ENCODE measurements at regions of chr3 and their contacts with region 1.

Region 1: DNA sequence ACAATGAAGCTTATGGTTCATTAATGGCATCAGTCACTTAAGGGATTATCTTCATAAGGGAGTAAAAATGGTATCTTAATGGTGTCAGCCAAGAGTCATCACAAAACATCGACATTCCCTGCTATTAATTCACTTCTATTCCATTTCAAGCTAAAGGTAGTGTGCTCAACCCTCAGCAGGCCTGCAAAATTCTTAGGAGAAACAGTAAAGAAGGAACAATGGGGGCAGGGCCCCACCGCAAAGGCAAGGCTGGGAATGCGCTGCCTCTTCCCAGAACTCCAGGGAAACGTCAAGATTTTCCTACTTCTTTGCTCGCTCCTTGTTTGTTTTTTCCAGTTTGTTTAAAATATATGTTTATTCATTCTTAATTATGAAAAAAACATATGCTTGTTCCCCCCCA is 187.3 kb upstream of the TSC22D2 start:
- DNase-seq: no peak
- H3K4me3 ChIP-seq: no peak overlapping the region
- H3K27ac ChIP-seq: no peak overlapping the region
- H3K4me1 ChIP-seq: peaks cover 4% of the 10 kb centered on the region
- CTCF ChIP-seq: no peak

Region 2: DNA sequence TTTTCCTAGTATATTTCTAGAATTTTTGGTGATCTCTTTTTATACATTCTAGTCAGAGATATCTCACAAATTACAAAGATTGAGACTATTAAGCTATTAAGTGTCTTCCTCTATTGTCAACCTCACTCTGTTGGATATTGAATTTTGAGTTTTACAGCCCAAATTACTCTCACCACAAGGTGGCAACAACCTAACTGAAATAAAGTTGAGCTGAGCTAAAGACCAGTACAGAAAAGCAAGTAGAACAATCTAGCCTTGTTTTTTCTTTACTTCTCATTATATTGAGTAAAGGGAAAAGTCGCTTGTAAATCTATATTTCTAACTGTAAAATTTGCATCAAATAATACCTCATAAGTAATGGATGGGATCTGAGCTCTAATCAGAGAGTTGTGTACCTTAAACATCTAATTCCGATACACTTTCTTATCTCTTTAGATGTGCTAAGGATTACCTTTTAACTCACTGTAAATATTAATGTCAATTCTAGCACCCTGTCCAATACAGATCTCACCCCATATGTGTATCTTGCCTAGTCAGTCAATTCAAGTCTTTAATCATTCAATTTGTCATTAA is 455.0 kb before region 1 on chr3:
- CTCF ChIA-PET with region 1: no interaction called
- POLR2A ChIA-PET with region 1: no interaction called
- intact Hi-C with region 1: loop called (anchors 5 kb)
- DNase-seq: peak; percentile 37
- H3K4me3 ChIP-seq: no peak overlapping the region
- H3K27ac ChIP-seq: no peak overlapping the region
- H3K4me1 ChIP-seq: no peaks in the 10 kb centered on the region
- CTCF ChIP-seq: peak; percentile 84

Region 3: GRCh38 chr3:149936812-149937233 is 284.0 kb before region 1 on chr3:
- CTCF ChIA-PET with region 1: no interaction called
- POLR2A ChIA-PET with region 1: no interaction called
- intact Hi-C with region 1: loop called (anchors 2 kb)
- DNase-seq: peak; percentile 39
- H3K4me3 ChIP-seq: no peak overlapping the region
- H3K27ac ChIP-seq: no peak overlapping the region
- H3K4me1 ChIP-seq: no peaks in the 10 kb centered on the region
- CTCF ChIP-seq: peak; percentile 87

Region 4: DNA sequence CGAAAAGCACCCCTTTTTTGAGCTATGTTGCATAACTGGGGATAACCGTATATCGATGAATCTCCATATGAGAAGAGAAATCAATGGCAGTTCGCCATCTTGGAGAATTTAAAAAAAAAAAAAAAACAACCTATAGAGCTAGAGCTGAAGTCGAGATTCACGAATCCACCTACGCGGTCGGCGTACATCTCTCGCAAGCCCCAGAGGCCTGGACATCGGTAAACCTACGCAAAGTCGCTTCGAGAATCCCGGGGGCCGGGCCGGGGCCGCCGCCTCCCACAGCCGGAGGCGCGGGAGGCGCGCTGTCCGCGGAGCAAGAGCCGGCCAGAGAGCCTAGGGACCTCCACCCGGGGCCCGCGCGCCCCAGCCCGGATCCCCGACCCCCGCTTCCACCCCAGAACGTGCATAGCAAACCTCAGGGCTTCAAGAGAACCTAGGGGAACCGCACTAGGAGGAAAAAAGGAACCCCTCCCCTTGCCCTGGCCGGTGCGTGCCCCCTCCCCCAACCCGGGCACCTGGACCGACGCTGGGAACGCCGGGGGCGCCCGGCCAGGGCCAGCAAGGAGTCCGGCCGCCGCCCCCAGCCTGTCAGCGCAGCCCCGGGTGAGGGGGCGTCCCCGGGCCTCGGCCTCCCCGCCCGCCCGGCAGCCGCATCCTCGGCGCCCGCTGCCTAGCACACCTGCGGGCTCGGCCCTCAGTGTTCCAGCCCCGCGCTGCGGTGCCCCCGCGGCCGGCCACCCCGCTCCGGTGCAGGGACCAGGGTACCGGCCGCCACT is 250.7 kb before region 1 on chr3:
- CTCF ChIA-PET with region 1: interaction called, 3 read pairs
- POLR2A ChIA-PET with region 1: no interaction called
- intact Hi-C with region 1: loop called (anchors 5 kb)
- DNase-seq: peak; percentile 55
- H3K4me3 ChIP-seq: peak overlapping the region; percentile 71
- H3K27ac ChIP-seq: no peak overlapping the region
- H3K4me1 ChIP-seq: peaks cover 8% of the 10 kb centered on the region
- CTCF ChIP-seq: no peak

Region 5: GRCh38 chr3:150094150-150094925 is 126.5 kb before region 1 on chr3:
- CTCF ChIA-PET with region 1: no interaction called
- POLR2A ChIA-PET with region 1: no interaction called
- intact Hi-C with region 1: no loop called
- DNase-seq: no peak
- H3K4me3 ChIP-seq: no peak overlapping the region
- H3K27ac ChIP-seq: no peak overlapping the region
- H3K4me1 ChIP-seq: no peaks in the 10 kb centered on the region
- CTCF ChIP-seq: no peak

Measured in OCI-LY7 (cell line).